ENCODE measurements at regions of chr2 and their contacts with region 1.

Region 1: GRCh38 chr2:27322766-27323595 is at the start of gene MPV17:
- DNase-seq: peak; percentile 86 to 95 (median 94)
- H3K4me3 ChIP-seq: peak within 1 kb of the TSS; percentile 68 to 99 (median 87)
- H3K27ac ChIP-seq: peak within 1 kb of the TSS; percentile 36 to 99 (median 93)
- H3K27me3 ChIP-seq: no peaks in the 10 kb centered on the region
- CTCF ChIP-seq: peak in 12 of 56 donors; percentile 10 to 36 (median 20)
- total RNA-seq, gene MPV17: 78.1 to 133 (median 103) TPM

Region 2: DNA sequence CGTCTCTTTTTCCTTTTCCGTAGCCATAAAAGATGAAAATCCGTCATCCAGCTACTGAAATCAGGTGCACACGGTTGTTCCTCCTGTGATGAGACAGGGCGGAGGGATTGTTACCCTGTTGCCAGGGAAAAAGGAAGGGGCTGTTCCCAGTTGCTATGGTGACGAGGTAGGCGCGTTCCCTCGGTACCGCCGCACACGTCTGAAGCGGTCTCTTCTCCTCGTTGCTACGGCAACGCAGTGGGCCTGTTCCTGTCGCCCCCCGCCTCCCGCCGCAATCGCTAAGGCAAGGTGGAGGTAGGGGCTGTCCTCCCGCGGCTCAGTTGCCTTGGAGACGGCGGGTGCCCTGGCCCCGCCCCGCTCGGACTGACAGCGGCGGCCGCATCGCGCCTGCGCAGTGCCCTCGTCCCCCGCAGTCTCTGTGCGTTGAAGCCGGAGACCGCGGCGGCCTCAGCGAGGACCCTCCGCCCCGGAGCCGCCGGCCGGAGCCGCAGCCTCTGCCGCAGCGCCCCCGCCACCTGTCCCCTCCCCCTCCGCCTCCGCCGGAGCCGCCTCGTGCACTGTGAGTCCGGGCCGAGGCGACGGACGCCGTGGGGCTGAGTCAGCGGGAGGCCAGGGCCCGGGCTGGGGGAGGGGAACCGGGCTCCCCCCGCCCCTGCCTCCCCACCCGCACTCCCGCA is 352.6 kb before region 1 on chr2 and contains the start of gene MAPRE3:
- intact Hi-C with region 1: loop called in 1 of 2 experiments (anchors 10 kb)
- DNase-seq: peak; percentile 80 to 94 (median 90)
- H3K4me3 ChIP-seq: peak within 1 kb of the TSS; percentile 61 to 96 (median 84)
- H3K27ac ChIP-seq: peak within 1 kb of the TSS in 55 of 59 donors; percentile 24 to 91 (median 76)
- H3K27me3 ChIP-seq: no peaks in the 10 kb centered on the region
- CTCF ChIP-seq: peak in 11 of 56 donors; percentile 5 to 34 (median 19)
- total RNA-seq, gene MAPRE3: 97.4 to 247 (median 192) TPM

Region 3: GRCh38 chr2:27217217-27218121 is 105.5 kb before region 1 on chr2 and contains the start of gene CAD:
- intact Hi-C with region 1: loop called in 1 of 2 experiments (anchors 2 kb)
- DNase-seq: peak; percentile 73 to 91 (median 88)
- H3K4me3 ChIP-seq: peak within 1 kb of the TSS; percentile 41 to 92 (median 72)
- H3K27ac ChIP-seq: peak within 1 kb of the TSS in 50 of 59 donors; percentile 5 to 84 (median 69)
- H3K27me3 ChIP-seq: no peaks in the 10 kb centered on the region
- CTCF ChIP-seq: peak in 44 of 56 donors; percentile 11 to 59 (median 32)
- total RNA-seq, gene CAD: 18.2 to 44.6 (median 27.8) TPM

Region 4: DNA sequence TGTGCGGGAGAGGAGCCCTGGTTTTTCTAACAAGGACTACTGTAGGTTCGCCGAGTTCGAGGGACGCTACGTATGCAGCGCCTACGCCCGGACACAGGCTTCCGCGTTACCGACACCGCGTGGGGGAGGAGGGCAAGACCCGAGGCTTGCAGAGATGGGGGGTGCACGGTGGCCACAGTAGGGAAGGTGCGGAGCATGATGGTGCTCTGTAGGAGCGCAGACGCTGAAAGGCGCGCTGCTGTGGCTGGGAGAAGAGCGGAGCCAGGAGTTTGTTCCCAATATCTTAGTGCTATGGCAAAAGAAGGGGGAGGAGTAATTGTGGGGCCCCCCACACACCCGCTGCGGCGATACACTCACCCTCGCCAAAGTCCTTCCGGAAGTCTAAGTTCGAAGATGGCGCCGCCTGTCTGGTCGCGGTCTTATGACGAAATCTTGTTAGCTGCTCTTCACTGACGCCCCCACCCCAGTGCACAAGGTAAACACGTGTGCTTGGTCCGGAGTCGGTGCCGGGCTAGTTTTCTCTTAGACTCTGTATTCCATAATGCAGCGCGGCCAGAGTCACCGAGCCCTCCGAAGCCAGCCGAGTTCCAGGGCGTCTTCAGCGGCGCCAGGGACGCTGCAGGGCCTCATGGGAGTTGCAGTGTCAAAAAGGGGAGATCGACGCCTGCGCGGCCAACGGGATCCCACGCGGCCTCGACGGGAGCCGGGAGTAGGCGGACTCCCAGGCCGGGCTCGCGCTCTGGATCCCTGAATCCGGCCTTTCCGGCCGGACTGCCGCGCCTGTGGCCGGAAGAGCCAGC is 33.6 kb after region 1 on chr2 and contains the start of gene GTF3C2:
- intact Hi-C with region 1: loop called (anchors 2 kb)
- DNase-seq: peak; percentile 93 to 98 (median 95)
- H3K4me3 ChIP-seq: peak within 1 kb of the TSS; percentile 64 to 100 (median 95)
- H3K27ac ChIP-seq: peak within 1 kb of the TSS; percentile 46 to 97 (median 90)
- H3K27me3 ChIP-seq: no peaks in the 10 kb centered on the region
- CTCF ChIP-seq: peak in 40 of 56 donors; percentile 5 to 61 (median 30)
- total RNA-seq, gene GTF3C2: 37.3 to 76.0 (median 50.6) TPM

Region 5: GRCh38 chr2:27428213-27428977 is 105.4 kb after region 1 on chr2 and contains the start of gene NRBP1:
- intact Hi-C with region 1: loop called in 1 of 2 experiments (anchors 5 kb)
- DNase-seq: peak; percentile 83 to 97 (median 93)
- H3K4me3 ChIP-seq: peak within 1 kb of the TSS; percentile 67 to 100 (median 94)
- H3K27ac ChIP-seq: peak within 1 kb of the TSS; percentile 81 to 99 (median 96)
- H3K27me3 ChIP-seq: no peaks in the 10 kb centered on the region
- CTCF ChIP-seq: peak in 33 of 56 donors; percentile 2 to 48 (median 27)
- total RNA-seq, gene NRBP1: 61.5 to 97.0 (median 80.4) TPM

Measured in dorsolateral prefrontal cortex (tissue), 120 donors.